ENCODE measurements at regions of chr10 and their contacts with region 1.

Region 1: GRCh38 chr10:69217119-69217754 is 2.9 kb upstream of the HKDC1 start:
- DNase-seq: no peak
- ATAC-seq: no peak
- H3K4me3 ChIP-seq: no peak overlapping the region
- H3K27ac ChIP-seq: no peak overlapping the region
- H3K4me1 ChIP-seq: peaks cover 8% of the 10 kb centered on the region
- H3K27me3 ChIP-seq: no peaks in the 10 kb centered on the region
- CTCF ChIP-seq: no peak
- EP300 ChIP-seq: no peak
- POLR2A ChIP-seq: no peak
- RAD21 ChIP-seq: no peak

Region 2: DNA sequence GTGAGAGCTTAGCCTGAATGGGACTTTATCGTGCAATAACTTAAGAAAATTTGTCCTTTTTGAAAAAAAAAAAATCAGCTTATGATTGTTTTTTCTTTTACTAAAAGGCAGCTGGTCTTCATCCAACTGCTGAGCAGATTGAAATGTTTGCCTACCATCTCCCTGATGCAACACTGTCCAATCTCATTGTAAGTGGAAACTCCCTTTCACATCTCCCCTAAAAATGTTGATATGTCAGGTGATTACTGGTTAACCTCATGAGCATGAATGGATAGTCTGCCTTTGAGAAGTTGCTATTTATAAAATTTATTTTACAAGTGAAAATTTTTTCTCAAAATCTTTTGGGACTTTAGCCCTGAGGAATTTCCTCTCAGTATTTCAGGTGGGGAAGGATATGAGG is 14.9 kb before region 1 on chr10:
- CTCF ChIA-PET with region 1: interaction called, 4 read pairs
- POLR2A ChIA-PET with region 1: interaction called, 4 read pairs
- RAD21 ChIA-PET with region 1: interaction called, 11 read pairs
- SMC1A ChIA-PET with region 1: interaction called, 10 read pairs
- in situ Hi-C with region 1: no loop called
- intact Hi-C with region 1: no loop called
- DNase-seq: peak; percentile 39
- ATAC-seq: peak; percentile 89
- H3K4me3 ChIP-seq: no peak overlapping the region
- H3K27ac ChIP-seq: peak overlapping the region; percentile 8; the same call in 1 of the 2 replicates
- H3K4me1 ChIP-seq: no peaks in the 10 kb centered on the region
- H3K27me3 ChIP-seq: no peaks in the 10 kb centered on the region
- CTCF ChIP-seq: no peak
- EP300 ChIP-seq: peak in 1 of 2 experiments; percentile 81; a peak in 2 of 4 replicates
- POLR2A ChIP-seq: no peak
- RAD21 ChIP-seq: no peak

Measured in GM12878 (cell line).